Caco-2 (cell line): ENCODE measurements at regions of chr11 and their contacts with region 1.

Region 1: DNA sequence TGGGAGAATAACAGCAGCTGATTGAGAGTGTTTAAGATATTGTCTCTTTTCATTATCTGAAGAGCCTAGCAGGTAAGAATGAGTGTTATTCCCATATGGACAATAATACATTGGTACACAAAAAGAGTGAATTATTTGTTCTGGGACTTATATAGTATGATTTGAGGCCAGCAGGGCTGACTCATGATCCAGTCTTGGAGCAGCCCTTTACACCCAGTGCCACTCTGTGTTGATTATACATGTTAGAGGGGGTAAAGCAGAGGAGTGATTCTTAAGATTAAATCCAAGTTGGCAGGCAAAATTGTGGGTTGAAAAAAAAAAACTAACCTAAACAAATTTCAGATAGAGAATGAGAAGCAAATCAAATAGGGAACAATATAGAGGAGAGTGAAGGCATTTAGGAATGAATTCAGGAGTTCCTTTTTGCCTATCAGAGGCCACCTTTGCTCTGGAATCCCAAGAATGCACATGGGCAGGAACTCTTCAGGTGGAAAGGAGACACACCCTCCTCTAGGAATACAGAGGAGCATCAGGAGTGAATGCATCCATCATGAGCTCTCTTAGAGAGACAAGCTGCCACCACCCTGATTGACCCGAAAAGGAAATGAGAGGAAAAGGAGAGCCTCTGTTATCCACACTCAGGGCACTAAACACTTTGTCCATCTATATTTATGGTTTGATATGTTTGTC is 19.2 kb upstream of the MRGPRX1 start:
- DNase-seq: peak; percentile 66 to 82
- H3K4me3 ChIP-seq: no peak overlapping the region
- H3K4me3 Mint-ChIP-seq: peak overlapping the region; percentile 39
- H3K27ac Mint-ChIP-seq: peak overlapping the region; percentile 95
- H3K4me1 ChIP-seq: peaks cover 19% of the 10 kb centered on the region
- H3K4me1 Mint-ChIP-seq: peaks cover 19% of the 10 kb centered on the region
- H3K27me3 ChIP-seq: no peaks in the 10 kb centered on the region
- H3K27me3 Mint-ChIP-seq: no peaks in the 10 kb centered on the region
- CTCF ChIP-seq: no peak

Region 2: GRCh38 chr11:18936002-18936673 is 22.2 kb before region 1 on chr11:
- CTCF ChIA-PET with region 1: no interaction called
- POLR2A ChIA-PET with region 1: no interaction called
- intact Hi-C with region 1: loop called (anchors 1 kb)
- DNase-seq: peak; percentile 60 to 76
- H3K4me3 ChIP-seq: no peak overlapping the region
- H3K4me3 Mint-ChIP-seq: no peak overlapping the region
- H3K27ac Mint-ChIP-seq: no peak overlapping the region
- H3K4me1 ChIP-seq: peaks cover 16% of the 10 kb centered on the region
- H3K4me1 Mint-ChIP-seq: no peaks in the 10 kb centered on the region
- H3K27me3 ChIP-seq: no peaks in the 10 kb centered on the region
- H3K27me3 Mint-ChIP-seq: no peaks in the 10 kb centered on the region
- CTCF ChIP-seq: no peak

Region 3: GRCh38 chr11:18972336-18972735 is 14.0 kb after region 1 on chr11:
- CTCF ChIA-PET with region 1: interaction called, 3 read pairs
- POLR2A ChIA-PET with region 1: no interaction called
- intact Hi-C with region 1: loop called (anchors 2 kb)
- DNase-seq: no peak
- H3K4me3 ChIP-seq: no peak overlapping the region
- H3K4me3 Mint-ChIP-seq: no peak overlapping the region
- H3K27ac Mint-ChIP-seq: peak overlapping the region; percentile 10
- H3K4me1 ChIP-seq: peaks cover 13% of the 10 kb centered on the region
- H3K4me1 Mint-ChIP-seq: peaks cover 13% of the 10 kb centered on the region
- H3K27me3 ChIP-seq: no peaks in the 10 kb centered on the region
- H3K27me3 Mint-ChIP-seq: no peaks in the 10 kb centered on the region
- CTCF ChIP-seq: no peak